HCT116 (cell line): ENCODE measurements at regions of chr11 and their contacts with region 1.

Region 1: DNA sequence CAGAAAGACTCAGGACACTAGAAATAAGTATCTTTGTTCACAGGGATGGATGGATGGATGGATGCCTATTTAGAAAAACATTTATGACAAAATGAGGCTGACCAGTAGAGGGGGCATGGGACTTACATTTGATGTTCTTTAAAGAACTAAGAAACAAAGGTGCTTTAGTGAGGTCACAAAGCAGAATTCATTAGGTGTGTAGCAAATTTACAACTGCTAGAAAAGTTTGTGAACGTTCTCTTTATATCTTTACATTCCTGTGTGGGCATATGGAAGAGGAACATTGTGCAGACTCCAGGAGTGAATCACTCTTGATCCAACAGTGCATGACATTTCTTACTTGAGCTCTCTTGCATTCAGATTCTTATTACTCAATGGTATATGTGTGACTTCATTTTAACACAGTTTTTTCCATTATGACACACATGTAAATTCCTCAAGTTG is 15.8 kb upstream of the SIK2 start:
- DNase-seq: peak; percentile 55
- ATAC-seq: peak; percentile 81
- H3K4me3 ChIP-seq: no peak overlapping the region
- H3K27ac ChIP-seq: no peak overlapping the region
- H3K4me1 ChIP-seq: no peaks in the 10 kb centered on the region
- H3K27me3 ChIP-seq: no peaks in the 10 kb centered on the region
- CTCF ChIP-seq: peak; percentile 58 to 82 (median 72); a peak in 5 of 6 replicates
- POLR2A ChIP-seq: no peak
- RAD21 ChIP-seq: peak; percentile 87

Region 2: DNA sequence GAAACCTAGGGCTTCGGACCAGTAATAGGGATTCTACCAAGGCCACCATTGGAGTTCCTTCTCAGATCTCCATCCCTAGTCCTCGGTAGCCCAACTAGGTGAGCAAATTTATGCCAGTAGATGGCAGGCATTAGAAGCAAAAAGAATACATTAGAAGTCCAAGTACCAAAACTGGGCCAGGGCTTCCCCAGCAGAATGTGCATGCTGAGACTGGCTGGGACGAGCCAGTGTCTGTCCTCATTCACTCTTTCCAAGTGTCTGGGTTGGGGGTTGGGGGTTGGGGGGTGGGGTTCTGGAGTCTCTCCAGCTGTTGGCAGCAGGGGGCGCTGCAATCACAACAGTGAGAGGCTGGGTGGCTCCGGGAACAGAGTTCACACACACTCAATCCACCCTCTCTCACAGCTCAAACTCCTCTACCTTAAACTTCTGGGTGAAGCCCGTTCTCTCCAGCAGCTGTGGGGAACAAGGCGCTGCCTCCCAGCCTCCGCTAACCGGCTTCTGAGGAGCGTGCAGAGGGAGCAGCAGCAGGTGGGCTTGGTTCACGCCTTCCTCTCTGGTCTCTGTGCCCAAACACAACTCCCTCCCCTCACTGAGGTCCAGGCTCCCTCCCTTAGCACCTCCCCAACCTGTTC is 131.7 kb before region 1 on chr11:
- CTCF ChIA-PET with region 1: no interaction called
- POLR2A ChIA-PET with region 1: no interaction called
- RAD21 ChIA-PET with region 1: no interaction called
- intact Hi-C with region 1: loop called (anchors 1 kb)
- DNase-seq: no peak
- ATAC-seq: peak; percentile 85
- H3K4me3 ChIP-seq: no peak overlapping the region
- H3K27ac ChIP-seq: no peak overlapping the region
- H3K4me1 ChIP-seq: no peaks in the 10 kb centered on the region
- H3K27me3 ChIP-seq: peaks cover 5% of the 10 kb centered on the region; the same call in 1 of the 2 replicates
- CTCF ChIP-seq: peak in 2 of 3 experiments; percentile 32 to 48; a peak in 4 of 6 replicates
- POLR2A ChIP-seq: no peak
- RAD21 ChIP-seq: peak; percentile 60

Region 3: GRCh38 chr11:111992206-111992855 is 405.9 kb after region 1 on chr11:
- CTCF ChIA-PET with region 1: no interaction called
- POLR2A ChIA-PET with region 1: no interaction called
- RAD21 ChIA-PET with region 1: no interaction called
- intact Hi-C with region 1: loop called (anchors 10 kb)
- DNase-seq: no peak
- ATAC-seq: no peak
- H3K4me3 ChIP-seq: no peak overlapping the region
- H3K27ac ChIP-seq: no peak overlapping the region
- H3K4me1 ChIP-seq: no peaks in the 10 kb centered on the region
- H3K27me3 ChIP-seq: no peaks in the 10 kb centered on the region
- CTCF ChIP-seq: no peak
- POLR2A ChIP-seq: no peak
- RAD21 ChIP-seq: no peak